ENCODE measurements at regions of chr7 and their contacts with region 1.

Region 1: DNA sequence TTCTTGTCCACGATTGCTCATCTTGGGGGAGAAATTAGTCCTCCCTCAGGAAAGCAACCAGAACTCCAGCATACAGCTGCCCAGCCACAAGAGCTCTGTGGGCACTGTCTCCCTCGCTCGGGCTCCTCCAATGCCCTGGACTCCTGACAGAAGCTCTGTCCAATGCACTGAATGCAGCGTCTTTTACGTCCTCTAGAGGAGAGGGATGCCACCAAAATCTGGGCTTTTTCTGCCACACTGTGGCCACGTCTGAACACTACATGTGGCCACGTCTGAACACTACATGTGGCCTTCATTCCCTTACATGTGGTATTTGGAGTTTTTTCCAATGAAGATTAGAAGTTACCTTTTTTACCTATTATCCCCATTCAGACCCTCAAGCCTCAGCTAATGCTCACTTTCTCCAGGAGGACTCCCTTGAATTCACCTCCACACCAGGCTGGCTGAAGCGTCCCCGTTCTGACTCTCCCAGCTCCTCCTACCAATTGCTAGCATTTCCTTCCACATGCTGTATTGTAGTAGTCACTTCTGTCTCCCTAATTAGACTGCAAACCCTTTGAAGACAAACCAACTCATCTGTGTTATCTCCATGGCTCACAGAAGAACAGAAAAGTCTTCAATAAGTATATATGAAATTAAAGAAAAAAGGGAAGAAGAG is 134.3 kb upstream of the PDE1C start:
- DNase-seq: peak; percentile 86

Region 2: DNA sequence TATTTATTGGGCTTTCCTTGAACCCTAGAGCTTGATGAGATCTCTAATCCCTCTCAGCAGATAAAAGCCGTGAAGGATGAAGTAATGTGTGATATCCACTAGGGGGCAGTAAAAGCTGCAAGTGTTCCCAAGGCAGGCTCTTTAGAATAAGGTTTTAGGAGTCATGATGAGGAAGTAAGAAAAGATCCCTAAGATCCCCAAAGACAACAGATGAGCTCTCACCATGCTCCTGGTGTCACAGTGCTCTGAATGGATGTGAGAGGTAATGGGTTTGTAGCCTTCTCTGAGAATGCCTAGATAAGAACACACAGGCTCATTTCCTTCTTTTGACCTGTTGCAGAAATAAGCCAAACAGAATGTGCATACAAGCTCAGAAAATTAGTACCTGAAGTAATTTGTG is 761.0 kb before region 1 on chr7:
- intact Hi-C with region 1: loop called in 1 of 2 experiments (anchors 10 kb)
- DNase-seq: no peak

Region 3: GRCh38 chr7:31744294-31744874 is 460.1 kb before region 1 on chr7:
- intact Hi-C with region 1: loop called (anchors 5 to 10 kb)
- DNase-seq: peak; percentile 88

Measured in posterior vena cava (tissue), 2 donors.